ENCODE measurements at regions of chr13 and their contacts with region 1.

Region 1: GRCh38 chr13:41054212-41054877 is 7.0 kb upstream of the WBP4 start:
- DNase-seq: no peak
- ATAC-seq: peak; percentile 63; the same call in 1 of the 2 replicates
- H3K4me3 ChIP-seq: no peak overlapping the region
- H3K27ac ChIP-seq: no peak overlapping the region; the same call in 1 of the 2 replicates
- H3K4me1 ChIP-seq: peaks cover 30 to 53% of the 10 kb centered on the region in 2 experiments
- H3K27me3 ChIP-seq: no peaks in the 10 kb centered on the region
- CTCF ChIP-seq: peak in 2 of 3 experiments; percentile 42 to 71; a peak in 3 of 6 replicates
- POLR2A ChIP-seq: no peak
- RAD21 ChIP-seq: no peak

Region 2: DNA sequence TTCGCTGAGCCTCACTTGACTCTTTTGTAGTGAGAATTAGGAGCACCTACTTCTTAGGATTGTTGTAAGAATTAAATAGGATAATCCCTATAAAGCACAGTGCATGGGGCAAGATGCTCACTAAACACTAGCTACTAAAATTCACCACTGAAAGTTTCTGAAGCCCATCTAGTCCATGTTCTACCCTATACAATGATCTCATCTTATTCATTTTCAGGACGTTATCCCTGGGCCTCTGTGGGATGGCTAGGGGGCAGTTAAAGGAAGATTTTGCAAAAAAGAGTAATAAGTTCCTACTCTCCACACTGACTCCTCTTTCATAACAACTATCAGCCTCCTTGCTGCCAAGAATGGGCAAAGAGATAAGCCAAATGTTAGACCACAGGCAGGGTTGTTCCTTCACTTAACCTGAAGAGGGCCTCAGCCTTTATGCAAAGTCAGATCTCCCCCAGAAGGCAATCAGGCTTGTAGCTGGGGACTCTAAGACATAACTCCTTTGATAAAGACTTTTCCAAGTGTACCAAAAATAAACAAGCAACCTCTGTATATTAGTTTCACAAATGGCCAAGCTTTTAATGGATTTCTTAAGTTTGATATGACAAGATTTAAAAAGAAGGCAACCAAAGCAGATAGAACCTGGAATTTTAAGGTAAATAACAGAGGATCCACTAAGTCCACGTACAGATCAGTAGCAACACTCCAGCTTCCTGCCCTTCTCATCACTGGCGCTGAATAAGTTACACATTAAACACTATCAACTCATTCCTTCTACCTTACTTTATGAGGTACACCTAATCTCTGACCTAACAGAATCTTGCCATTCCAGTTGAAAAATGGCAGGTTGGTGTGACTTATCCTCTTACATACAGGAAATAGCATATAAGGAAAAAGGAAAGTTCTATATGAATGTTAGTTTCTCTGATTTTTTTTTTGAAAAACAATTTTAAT is 79.6 kb before region 1 on chr13:
- CTCF ChIA-PET with region 1: no interaction called
- POLR2A ChIA-PET with region 1: no interaction called
- RAD21 ChIA-PET with region 1: no interaction called
- intact Hi-C with region 1: loop called (anchors 10 kb)
- DNase-seq: peak; percentile 23
- ATAC-seq: peak; percentile 98
- H3K4me3 ChIP-seq: no peak overlapping the region
- H3K27ac ChIP-seq: no peak overlapping the region
- H3K4me1 ChIP-seq: peaks cover 0 to 8% of the 10 kb centered on the region in 2 experiments; a peak in 2 of 4 replicates
- H3K27me3 ChIP-seq: no peaks in the 10 kb centered on the region
- CTCF ChIP-seq: peak; percentile 25 to 68 (median 65); a peak in 5 of 6 replicates
- POLR2A ChIP-seq: no peak
- RAD21 ChIP-seq: peak; percentile 45

Region 3: GRCh38 chr13:41222259-41222852 is 168.0 kb after region 1 on chr13:
- CTCF ChIA-PET with region 1: interaction called, 6 read pairs
- POLR2A ChIA-PET with region 1: no interaction called
- RAD21 ChIA-PET with region 1: interaction called in 1 of 2 experiments, 3 read pairs
- intact Hi-C with region 1: loop called (anchors 5 kb)
- DNase-seq: peak; percentile 50
- ATAC-seq: peak; percentile 96
- H3K4me3 ChIP-seq: no peak overlapping the region
- H3K27ac ChIP-seq: no peak overlapping the region
- H3K4me1 ChIP-seq: peaks cover 2 to 11% of the 10 kb centered on the region in 2 experiments; a peak in 3 of 4 replicates
- H3K27me3 ChIP-seq: no peaks in the 10 kb centered on the region
- CTCF ChIP-seq: peak; percentile 60 to 79 (median 77); a peak in 5 of 6 replicates
- POLR2A ChIP-seq: no peak
- RAD21 ChIP-seq: peak; percentile 61